T-cell (primary cell): ENCODE measurements at regions of chr11 and their contacts with region 1.

Region 1: GRCh38 chr11:82448857-82449256 is 284.8 kb downstream of the FAM181B start:
- DNase-seq: no peak
- ATAC-seq: no peak
- H3K4me3 ChIP-seq: no peak overlapping the region
- H3K4me3 Mint-ChIP-seq: no peak overlapping the region
- H3K27ac ChIP-seq: no peak overlapping the region
- H3K27ac Mint-ChIP-seq: no peak overlapping the region
- H3K4me1 ChIP-seq: no peaks in the 10 kb centered on the region
- H3K4me1 Mint-ChIP-seq: no peaks in the 10 kb centered on the region
- H3K27me3 ChIP-seq: no peaks in the 10 kb centered on the region
- H3K27me3 Mint-ChIP-seq: no peaks in the 10 kb centered on the region

Region 2: DNA sequence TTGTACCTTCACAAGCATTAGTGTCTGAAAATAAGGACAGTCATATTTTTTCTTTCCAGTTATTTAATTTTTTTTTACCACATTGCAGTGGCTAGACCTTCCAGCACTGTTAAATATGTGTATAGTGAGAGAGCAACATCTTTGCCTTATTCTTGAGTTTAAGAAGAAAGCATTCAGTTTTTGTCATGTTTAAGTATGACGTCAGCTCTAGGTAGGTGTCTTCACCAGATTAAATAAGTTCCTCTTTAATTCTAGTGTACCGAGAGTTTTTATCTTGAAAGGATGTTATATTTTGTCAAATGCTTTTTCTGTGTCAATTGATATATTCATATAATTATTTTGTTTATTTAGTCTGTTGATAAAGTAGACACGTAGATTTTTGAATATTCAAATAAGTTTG is 26.0 kb after region 1 on chr11:
- CTCF ChIA-PET with region 1: interaction called in 1 of 2 experiments, 3 read pairs
- POLR2A ChIA-PET with region 1: interaction called in 1 of 2 experiments, 10 read pairs
- DNase-seq: no peak
- ATAC-seq: no peak
- H3K4me3 ChIP-seq: no peak overlapping the region
- H3K4me3 Mint-ChIP-seq: no peak overlapping the region
- H3K27ac ChIP-seq: no peak overlapping the region
- H3K27ac Mint-ChIP-seq: no peak overlapping the region
- H3K4me1 ChIP-seq: no peaks in the 10 kb centered on the region
- H3K4me1 Mint-ChIP-seq: no peaks in the 10 kb centered on the region
- H3K27me3 ChIP-seq: no peaks in the 10 kb centered on the region
- H3K27me3 Mint-ChIP-seq: no peaks in the 10 kb centered on the region